HEK293 (cell line): ENCODE measurements at regions of chr1 and their contacts with region 1.

Region 1: GRCh38 chr1:200279810-200280411 is 129.9 kb downstream of the ZNF281 start:
- H3K4me3 ChIP-seq: no peak overlapping the region
- H3K27ac ChIP-seq: no peak overlapping the region
- H3K4me1 ChIP-seq: no peaks in the 10 kb centered on the region; the same call in 1 of the 2 replicates
- CTCF ChIP-seq: peak; percentile 62; the same call in 1 of the 2 replicates

Region 2: DNA sequence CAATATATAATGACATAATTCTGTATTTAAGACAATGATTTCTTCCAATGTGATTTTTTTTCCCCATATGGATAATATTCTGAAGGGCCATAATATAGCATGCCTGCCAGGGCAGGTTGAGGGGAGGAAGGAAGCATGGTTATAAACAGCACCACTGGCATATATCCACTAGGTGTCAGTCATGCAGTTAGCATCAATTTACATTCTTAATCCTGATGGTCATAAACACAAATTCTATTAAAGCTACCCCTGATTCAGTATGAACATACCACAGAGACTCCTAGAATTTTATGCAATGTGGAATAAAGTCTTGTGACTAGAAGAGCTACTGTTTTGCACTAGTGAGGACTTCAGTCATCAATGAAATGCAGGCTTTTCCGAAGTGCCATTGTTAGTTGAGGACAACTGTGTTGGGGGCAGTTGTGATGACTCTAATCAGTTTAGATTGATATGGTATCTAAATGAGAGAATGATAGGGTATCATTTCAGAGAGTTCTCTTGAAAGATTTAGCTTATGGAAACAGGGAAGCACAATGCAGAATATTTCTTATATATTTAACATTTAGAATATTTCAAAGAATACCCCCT is 595.1 kb before region 1 on chr1:
- CTCF ChIA-PET with region 1: interaction called, 13 read pairs
- POLR2A ChIA-PET with region 1: no interaction called
- H3K4me3 ChIP-seq: no peak overlapping the region
- H3K27ac ChIP-seq: no peak overlapping the region
- H3K4me1 ChIP-seq: no peaks in the 10 kb centered on the region
- CTCF ChIP-seq: no peak; the same call in 1 of the 2 replicates

Region 3: GRCh38 chr1:200139661-200140250 is 140.2 kb before region 1 on chr1:
- CTCF ChIA-PET with region 1: interaction called, 12 read pairs
- POLR2A ChIA-PET with region 1: no interaction called
- H3K4me3 ChIP-seq: no peak overlapping the region
- H3K27ac ChIP-seq: no peak overlapping the region
- H3K4me1 ChIP-seq: no peaks in the 10 kb centered on the region
- CTCF ChIP-seq: no peak

Region 4: GRCh38 chr1:200265051-200265450 is 14.9 kb before region 1 on chr1:
- CTCF ChIA-PET with region 1: interaction called, 13 read pairs
- POLR2A ChIA-PET with region 1: no interaction called
- H3K4me3 ChIP-seq: no peak overlapping the region
- H3K27ac ChIP-seq: no peak overlapping the region
- H3K4me1 ChIP-seq: no peaks in the 10 kb centered on the region
- CTCF ChIP-seq: no peak

Region 5: GRCh38 chr1:200290010-200290685 is 10.2 kb after region 1 on chr1:
- CTCF ChIA-PET with region 1: interaction called, 10 read pairs
- POLR2A ChIA-PET with region 1: no interaction called
- H3K4me3 ChIP-seq: no peak overlapping the region
- H3K27ac ChIP-seq: no peak overlapping the region
- H3K4me1 ChIP-seq: no peaks in the 10 kb centered on the region
- CTCF ChIP-seq: no peak

Region 6: GRCh38 chr1:200351826-200352549 is 72.1 kb after region 1 on chr1:
- CTCF ChIA-PET with region 1: no interaction called
- POLR2A ChIA-PET with region 1: no interaction called
- H3K4me3 ChIP-seq: no peak overlapping the region
- H3K27ac ChIP-seq: no peak overlapping the region
- H3K4me1 ChIP-seq: no peaks in the 10 kb centered on the region
- CTCF ChIP-seq: no peak

Region 7: DNA sequence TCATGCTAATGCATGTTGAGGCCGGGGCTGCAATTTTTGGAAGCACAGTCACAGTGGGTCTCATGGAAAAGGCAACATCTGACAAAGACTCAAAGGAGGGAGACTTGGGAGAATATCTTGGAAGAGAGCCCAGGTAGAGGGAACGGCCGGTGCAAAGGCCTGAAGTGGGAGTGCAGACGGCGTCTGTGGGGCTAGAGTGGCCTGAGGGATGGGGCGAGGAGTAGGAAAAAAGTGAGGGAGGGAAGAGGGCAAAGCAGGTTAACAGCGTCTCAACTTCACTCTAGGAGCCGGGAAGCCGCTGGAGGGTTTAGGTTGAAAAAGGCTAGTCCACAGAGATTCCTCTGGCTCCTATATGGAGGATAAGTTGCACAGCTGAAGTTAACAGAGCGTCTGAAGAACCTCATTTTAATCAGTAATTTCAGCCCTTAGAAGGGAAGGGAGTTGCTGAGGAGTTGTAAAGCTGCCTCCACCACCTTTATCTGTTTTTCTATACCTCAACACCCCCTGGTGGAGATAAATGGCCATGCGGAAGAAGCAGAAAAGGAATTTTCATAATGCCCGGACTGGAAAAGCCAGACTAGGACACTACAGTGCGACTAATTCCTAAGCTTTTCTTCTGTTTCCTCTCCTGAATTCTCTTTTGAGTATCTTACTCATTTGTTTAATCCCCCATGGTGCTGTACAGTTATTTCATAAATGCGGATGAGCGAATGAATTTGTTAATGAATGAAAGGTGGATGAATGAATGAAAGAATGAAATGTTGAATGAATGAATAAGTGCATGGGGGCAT is 208.7 kb after region 1 on chr1:
- CTCF ChIA-PET with region 1: interaction called, 23 read pairs
- POLR2A ChIA-PET with region 1: interaction called, 4 read pairs
- H3K4me3 ChIP-seq: no peak overlapping the region
- H3K27ac ChIP-seq: peak overlapping the region; percentile 45; the same call in 1 of the 2 replicates
- H3K4me1 ChIP-seq: peaks cover 8% of the 10 kb centered on the region; the same call in 1 of the 2 replicates
- CTCF ChIP-seq: peak; percentile 73